ENCODE measurements at regions of chr7 and their contacts with region 1.

Region 1: DNA sequence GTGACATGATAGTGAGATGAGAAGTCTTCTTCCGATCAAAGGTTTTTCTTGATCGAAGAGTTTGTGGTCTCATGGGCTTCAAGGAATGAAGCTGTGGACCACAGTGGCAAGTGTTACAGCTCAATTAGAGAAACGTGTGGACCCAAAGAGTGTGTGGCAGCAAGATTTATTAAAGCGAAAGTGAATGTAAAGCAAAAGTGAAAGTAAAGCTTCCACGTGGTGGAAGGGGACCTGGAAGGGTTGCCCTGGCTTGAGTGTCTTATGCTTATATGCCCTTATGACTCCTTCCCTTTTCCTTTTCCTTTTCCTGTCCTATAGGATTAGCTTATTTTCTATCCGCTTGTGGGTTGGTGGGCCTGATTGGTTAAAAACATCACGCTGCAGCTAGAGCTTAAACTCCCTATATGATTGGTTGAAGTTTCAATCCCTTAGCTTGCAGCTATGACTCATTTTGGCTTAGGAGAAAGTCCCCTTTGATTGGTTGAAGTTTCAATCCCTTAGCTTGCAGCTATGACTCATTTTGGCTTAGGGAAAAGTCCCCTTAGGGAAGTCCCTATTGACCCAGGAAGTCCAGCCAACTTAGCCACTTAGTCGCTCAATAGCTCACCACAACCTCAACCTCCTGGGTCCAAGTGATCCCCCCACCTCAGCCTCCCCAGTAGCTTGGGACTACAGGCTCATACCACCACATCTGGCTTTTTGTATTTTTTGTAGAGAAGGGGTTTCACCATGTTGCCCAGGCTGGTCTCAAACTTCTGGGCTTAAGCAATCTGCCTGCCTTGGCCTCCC is 34.7 kb downstream of the MRPS24 start:
- DNase-seq: peak; percentile 73
- ATAC-seq: peak; percentile 81
- H3K4me3 ChIP-seq: peak overlapping the region; percentile 52
- H3K27ac ChIP-seq: peak overlapping the region; percentile 69
- H3K4me1 ChIP-seq: peaks cover 4% of the 10 kb centered on the region; the same call in 1 of the 2 replicates
- H3K27me3 ChIP-seq: no peaks in the 10 kb centered on the region
- CTCF ChIP-seq: no peak
- EP300 ChIP-seq: peak in 1 of 2 experiments; percentile 6; a peak in 1 of 4 replicates
- POLR2A ChIP-seq: no peak
- RAD21 ChIP-seq: no peak

Region 2: GRCh38 chr7:43071604-43072003 is 763.1 kb before region 1 on chr7:
- CTCF ChIA-PET with region 1: no interaction called
- POLR2A ChIA-PET with region 1: no interaction called
- RAD21 ChIA-PET with region 1: no interaction called
- SMC1A ChIA-PET with region 1: no interaction called
- in situ Hi-C with region 1: no loop called
- intact Hi-C with region 1: loop called (anchors 5 kb)
- DNase-seq: no peak
- ATAC-seq: peak; percentile 48
- H3K4me3 ChIP-seq: no peak overlapping the region
- H3K27ac ChIP-seq: no peak overlapping the region
- H3K4me1 ChIP-seq: peaks cover 13% of the 10 kb centered on the region
- H3K27me3 ChIP-seq: no peaks in the 10 kb centered on the region
- CTCF ChIP-seq: peak; percentile 16 to 43 (median 34); a peak in 3 of 6 replicates
- EP300 ChIP-seq: no peak
- POLR2A ChIP-seq: no peak
- RAD21 ChIP-seq: peak; percentile 23; the same call in 1 of the 2 replicates

Region 3: DNA sequence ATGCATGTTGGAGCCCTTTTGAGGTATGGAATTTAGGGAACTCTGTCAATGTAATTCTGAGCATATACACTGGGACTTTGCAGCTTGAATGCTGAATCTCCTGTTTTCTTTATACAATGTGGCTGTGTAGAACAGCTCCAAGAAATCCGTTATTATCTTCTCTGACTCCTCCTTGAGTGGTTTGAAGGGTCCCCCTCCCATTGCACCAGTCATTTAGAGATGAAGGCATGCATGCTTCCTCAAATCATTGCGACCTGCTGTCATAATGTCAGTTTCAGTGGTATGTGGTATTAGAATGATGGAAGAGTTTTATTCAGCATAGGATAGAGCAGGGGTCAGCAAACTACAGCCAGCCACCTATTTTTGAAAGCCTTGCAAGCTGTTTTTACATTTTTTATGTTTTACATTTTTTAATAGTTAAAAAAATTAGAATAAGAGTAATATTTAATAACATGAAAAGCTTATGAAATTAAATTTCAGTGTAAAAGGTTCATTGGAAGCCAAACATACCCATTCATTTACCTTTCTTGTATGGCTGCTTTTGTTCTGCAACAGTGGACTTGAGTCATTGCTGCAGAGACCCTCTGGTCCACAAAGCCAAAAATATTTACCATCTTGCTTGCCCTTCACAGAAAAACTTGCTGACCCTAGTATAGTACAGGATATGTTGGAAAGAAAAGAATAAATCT is 243.7 kb before region 1 on chr7:
- CTCF ChIA-PET with region 1: interaction called, 16 read pairs
- POLR2A ChIA-PET with region 1: interaction called, 5 read pairs
- RAD21 ChIA-PET with region 1: interaction called, 6 read pairs
- SMC1A ChIA-PET with region 1: interaction called, 121 read pairs
- in situ Hi-C with region 1: no loop called
- intact Hi-C with region 1: no loop called
- DNase-seq: peak; percentile 87
- ATAC-seq: peak; percentile 65
- H3K4me3 ChIP-seq: peak overlapping the region; percentile 71
- H3K27ac ChIP-seq: peak overlapping the region; percentile 98
- H3K4me1 ChIP-seq: peaks cover 42% of the 10 kb centered on the region
- H3K27me3 ChIP-seq: no peaks in the 10 kb centered on the region
- CTCF ChIP-seq: no peak
- EP300 ChIP-seq: peak; percentile 87 to 99
- POLR2A ChIP-seq: no peak; the same call in 1 of the 2 replicates
- RAD21 ChIP-seq: 0 out of 2 replicates have a peak, but pooled peaks have one; percentile 13

Region 4: DNA sequence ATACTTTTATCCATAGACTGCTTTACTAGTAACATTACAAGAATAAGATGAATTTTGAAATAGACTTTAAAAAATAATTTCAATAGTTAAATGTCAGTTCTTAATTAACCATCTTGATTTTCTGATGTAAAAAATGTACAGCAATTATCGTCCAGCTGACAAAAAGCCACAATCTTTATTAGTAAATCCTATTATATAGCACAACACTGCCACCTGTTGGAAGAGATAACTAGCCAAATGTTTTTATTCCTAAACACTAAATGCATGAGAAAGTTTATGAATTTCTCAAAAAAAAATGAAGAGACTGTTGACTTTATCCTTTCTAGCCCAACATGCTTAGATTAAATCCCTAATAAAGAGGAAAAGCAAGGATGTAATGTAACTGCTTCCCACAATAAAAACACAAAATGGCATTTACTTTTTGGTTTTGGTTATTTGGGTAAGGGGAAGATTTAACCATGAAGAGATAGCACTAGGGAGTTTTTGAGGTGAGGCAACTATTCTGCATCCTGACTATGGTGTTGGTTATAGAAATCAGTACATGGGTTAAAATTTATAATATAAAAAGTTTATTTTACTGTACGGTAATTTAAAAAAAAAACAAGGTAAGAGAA is 113.4 kb before region 1 on chr7:
- CTCF ChIA-PET with region 1: interaction called, 84 read pairs
- POLR2A ChIA-PET with region 1: no interaction called
- RAD21 ChIA-PET with region 1: interaction called, 26 read pairs
- SMC1A ChIA-PET with region 1: interaction called, 26 read pairs
- in situ Hi-C with region 1: loop called (anchors 5 kb)
- intact Hi-C with region 1: no loop called
- DNase-seq: no peak
- ATAC-seq: peak; percentile 52
- H3K4me3 ChIP-seq: no peak overlapping the region
- H3K27ac ChIP-seq: no peak overlapping the region
- H3K4me1 ChIP-seq: no peaks in the 10 kb centered on the region
- H3K27me3 ChIP-seq: no peaks in the 10 kb centered on the region
- CTCF ChIP-seq: peak; percentile 40 to 64 (median 44); a peak in 5 of 6 replicates
- EP300 ChIP-seq: no peak
- POLR2A ChIP-seq: no peak
- RAD21 ChIP-seq: peak; percentile 68

Region 5: DNA sequence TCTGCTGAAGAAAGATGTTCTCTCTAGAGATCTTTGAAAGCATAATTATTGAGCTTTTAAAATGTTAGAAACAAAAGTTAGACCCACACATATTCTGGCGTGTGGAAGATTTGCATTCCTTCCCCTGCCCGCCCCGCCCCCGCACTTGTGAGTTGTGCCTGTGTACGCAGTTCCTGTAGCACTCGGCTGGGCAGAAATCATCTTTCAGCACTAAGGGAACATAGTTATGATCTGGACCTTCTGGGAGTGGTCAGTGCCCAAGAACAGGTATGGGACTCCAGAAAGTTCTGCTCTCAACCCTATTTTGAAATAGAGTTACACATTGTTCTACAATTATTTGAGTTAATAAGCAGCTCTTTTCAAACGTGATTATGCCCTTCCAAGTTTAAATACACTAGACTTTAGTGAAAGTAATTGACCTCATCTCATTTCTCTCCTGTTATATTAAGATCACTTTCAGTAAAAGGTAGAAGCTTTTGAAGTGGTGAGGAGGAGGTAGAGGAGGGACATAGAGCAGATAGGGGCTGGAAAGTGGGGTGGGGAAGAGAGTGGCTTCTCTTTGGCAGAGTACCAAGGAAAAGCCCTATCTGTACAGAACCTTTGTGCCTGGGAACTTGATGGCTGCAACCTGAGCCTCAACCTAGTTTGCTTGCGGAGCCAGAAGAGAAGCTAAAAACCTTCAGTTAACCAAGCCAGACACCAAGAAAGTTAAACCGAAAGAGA is 70.5 kb before region 1 on chr7:
- CTCF ChIA-PET with region 1: interaction called, 10 read pairs
- POLR2A ChIA-PET with region 1: interaction called, 4 read pairs
- RAD21 ChIA-PET with region 1: interaction called, 15 read pairs
- SMC1A ChIA-PET with region 1: interaction called, 8 read pairs
- in situ Hi-C with region 1: no loop called
- intact Hi-C with region 1: loop called (anchors 2 kb)
- DNase-seq: no peak
- ATAC-seq: peak; percentile 86
- H3K4me3 ChIP-seq: peak overlapping the region; percentile 77
- H3K27ac ChIP-seq: peak overlapping the region; percentile 76
- H3K4me1 ChIP-seq: peaks cover 29% of the 10 kb centered on the region
- H3K27me3 ChIP-seq: no peaks in the 10 kb centered on the region
- CTCF ChIP-seq: no peak
- EP300 ChIP-seq: no peak
- POLR2A ChIP-seq: peak; percentile 29; the same call in 1 of the 2 replicates
- RAD21 ChIP-seq: no peak